Heart right ventricle (tissue), 16 donors: ENCODE measurements at regions of chr5 and their contacts with region 1.

Region 1: GRCh38 chr5:173972925-173973615 is 15.9 kb upstream of the C5orf47 start:
- DNase-seq: peak; percentile 73 to 86
- ATAC-seq: peak; percentile 67 to 93 (median 87)
- H3K4me3 ChIP-seq: peak overlapping the region; percentile 16 to 59 (median 52)
- H3K27ac ChIP-seq: peak overlapping the region in 8 of 10 donors; percentile 1 to 80 (median 40)
- H3K4me1 ChIP-seq: peaks cover 0 to 21% (median 10%) of the 10 kb centered on the region in 9 donors
- H3K27me3 ChIP-seq: peaks cover 0 to 11% (median 0%) of the 10 kb centered on the region in 7 donors
- CTCF ChIP-seq: peak; percentile 66 to 93 (median 90)

Region 2: GRCh38 chr5:173293817-173294672 is 679.0 kb before region 1 on chr5:
- intact Hi-C with region 1: loop called in 2 of 10 experiments (anchors 10 kb)
- DNase-seq: peak; percentile 70 to 76
- ATAC-seq: peak; percentile 6 to 75 (median 66)
- H3K4me3 ChIP-seq: peak overlapping the region in 7 of 10 donors; percentile 4 to 31 (median 16)
- H3K27ac ChIP-seq: no peak overlapping the region
- H3K4me1 ChIP-seq: peaks cover 0 to 23% (median 9%) of the 10 kb centered on the region in 9 donors
- H3K27me3 ChIP-seq: peaks cover 0 to 57% (median 8%) of the 10 kb centered on the region in 7 donors
- CTCF ChIP-seq: peak; percentile 71 to 94 (median 89)

Region 3: DNA sequence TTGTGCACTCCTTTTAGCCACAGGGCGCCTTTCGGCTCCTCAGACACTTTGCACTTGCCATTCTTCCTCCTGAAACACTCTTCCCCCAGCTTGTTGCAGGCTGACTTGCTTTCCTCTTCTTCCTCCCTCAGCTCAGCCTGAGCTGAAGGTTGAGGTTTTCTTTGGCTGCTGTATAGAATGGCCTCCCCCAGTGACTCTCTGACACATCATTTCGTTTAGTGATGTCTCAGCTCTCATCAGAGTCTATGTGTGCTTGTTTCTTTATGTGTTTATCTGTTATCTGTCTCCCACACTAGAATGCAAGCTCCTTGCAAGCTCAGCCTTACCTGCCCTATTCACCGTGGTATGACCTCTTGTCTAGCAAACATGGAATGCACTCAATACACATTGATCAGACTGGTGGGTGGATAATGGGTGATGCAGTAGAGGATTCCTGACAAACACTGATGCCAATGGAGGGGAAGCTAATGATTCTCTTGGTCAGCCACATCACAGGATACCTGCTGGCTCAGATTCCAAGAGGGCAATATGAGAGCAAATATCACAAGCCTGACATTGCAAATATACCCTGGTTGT is 531.9 kb before region 1 on chr5:
- intact Hi-C with region 1: no loop called
- DNase-seq: no peak
- ATAC-seq: no peak
- H3K4me3 ChIP-seq: no peak overlapping the region
- H3K27ac ChIP-seq: no peak overlapping the region
- H3K4me1 ChIP-seq: no peaks in the 10 kb centered on the region
- H3K27me3 ChIP-seq: no peaks in the 10 kb centered on the region
- CTCF ChIP-seq: no peak

Region 4: GRCh38 chr5:173625696-173626504 is 347.2 kb before region 1 on chr5:
- intact Hi-C with region 1: loop called in 2 of 10 experiments (anchors 1 to 5 kb)
- DNase-seq: no peak
- ATAC-seq: peak; percentile 44 to 82 (median 62)
- H3K4me3 ChIP-seq: no peak overlapping the region
- H3K27ac ChIP-seq: peak overlapping the region in 2 of 10 donors; percentile 15 to 16
- H3K4me1 ChIP-seq: peaks cover 0 to 16% (median 9%) of the 10 kb centered on the region in 9 donors
- H3K27me3 ChIP-seq: no peaks in the 10 kb centered on the region
- CTCF ChIP-seq: peak in 5 of 9 donors; percentile 13 to 48 (median 39)

Region 5: GRCh38 chr5:173764321-173765029 is 208.6 kb before region 1 on chr5:
- intact Hi-C with region 1: loop called in 4 of 10 experiments (anchors 5 to 10 kb)
- DNase-seq: peak; percentile 79
- ATAC-seq: peak; percentile 24 to 82 (median 66)
- H3K4me3 ChIP-seq: no peak overlapping the region
- H3K27ac ChIP-seq: peak overlapping the region; percentile 2 to 91 (median 76)
- H3K4me1 ChIP-seq: peaks cover 0 to 58% (median 26%) of the 10 kb centered on the region in 9 donors
- H3K27me3 ChIP-seq: no peaks in the 10 kb centered on the region
- CTCF ChIP-seq: no peak

Region 6: DNA sequence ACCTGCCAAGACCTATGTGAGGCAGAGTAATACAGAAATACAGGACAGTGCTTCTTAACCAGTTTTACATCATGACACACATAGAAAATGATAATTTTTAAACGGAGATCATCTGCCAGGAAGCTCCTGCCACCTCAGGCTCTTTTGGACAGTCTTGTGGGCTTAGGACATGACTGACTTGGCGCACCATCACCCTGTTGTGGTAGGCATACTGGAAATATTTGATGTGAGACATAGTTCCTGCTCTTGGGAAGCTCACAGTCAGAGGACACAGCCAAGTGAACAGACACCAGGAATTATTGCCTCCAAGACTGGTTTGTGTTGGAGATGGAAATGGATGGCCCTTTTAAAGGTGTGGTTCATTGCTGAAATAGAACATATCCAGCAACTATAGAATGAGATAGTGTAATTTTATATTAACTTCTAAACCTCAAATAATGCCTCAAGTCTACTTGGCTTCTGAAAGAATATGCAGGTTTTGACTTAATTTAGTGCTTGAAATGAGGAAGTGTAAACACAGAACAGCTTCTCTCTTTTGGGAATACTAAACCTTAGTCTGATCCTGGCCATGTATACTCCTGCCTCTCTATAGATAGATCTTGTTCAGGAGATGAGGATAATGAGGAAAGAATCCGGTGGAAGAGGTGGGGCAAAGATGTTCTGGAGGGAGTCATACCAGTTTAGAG is 65.2 kb before region 1 on chr5:
- intact Hi-C with region 1: loop called in 1 of 10 experiments (anchors 5 kb)
- DNase-seq: no peak
- ATAC-seq: peak in 6 of 8 donors; percentile 38 to 68 (median 54)
- H3K4me3 ChIP-seq: peak overlapping the region in 1 of 10 donors; percentile 6
- H3K27ac ChIP-seq: peak overlapping the region in 8 of 10 donors; percentile 3 to 81 (median 69)
- H3K4me1 ChIP-seq: peaks cover 3 to 98% (median 78%) of the 10 kb centered on the region in 9 donors
- H3K27me3 ChIP-seq: no peaks in the 10 kb centered on the region
- CTCF ChIP-seq: no peak